ENCODE measurements at regions of chr4 and their contacts with region 1.

Region 1: GRCh38 chr4:60938621-60939020 is 261.5 kb upstream of the ADGRL3 start:
- DNase-seq: no peak
- H3K4me3 Mint-ChIP-seq: no peak overlapping the region
- H3K27ac Mint-ChIP-seq: no peak overlapping the region
- H3K4me1 Mint-ChIP-seq: no peaks in the 10 kb centered on the region
- H3K27me3 Mint-ChIP-seq: no peaks in the 10 kb centered on the region
- CTCF ChIP-seq: no peak

Region 2: DNA sequence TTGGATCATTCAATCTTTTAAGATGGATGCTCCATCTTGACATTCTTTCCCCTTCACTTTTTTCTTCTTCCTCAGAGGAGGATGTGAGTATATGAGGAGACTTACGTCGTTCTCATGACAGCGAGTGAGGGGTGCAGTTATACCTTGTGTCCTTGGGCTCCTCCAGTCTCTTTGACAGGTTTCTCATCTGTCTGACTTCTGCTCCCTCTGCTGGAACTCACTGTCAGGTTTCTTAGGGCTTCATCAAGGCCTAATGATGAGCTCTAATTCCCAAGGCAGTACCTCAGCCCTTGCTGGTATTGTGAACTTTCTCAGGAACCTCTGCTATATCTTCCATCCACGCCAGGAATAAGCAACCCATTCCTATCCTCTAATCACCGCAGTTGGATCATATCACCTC is 23.7 kb after region 1 on chr4:
- CTCF ChIA-PET with region 1: no interaction called
- intact Hi-C with region 1: loop called (anchors 1 kb)
- DNase-seq: no peak
- H3K4me3 Mint-ChIP-seq: no peak overlapping the region
- H3K27ac Mint-ChIP-seq: no peak overlapping the region
- H3K4me1 Mint-ChIP-seq: no peaks in the 10 kb centered on the region
- H3K27me3 Mint-ChIP-seq: no peaks in the 10 kb centered on the region
- CTCF ChIP-seq: no peak

Region 3: GRCh38 chr4:61301271-61301670 is 362.6 kb after region 1 on chr4:
- CTCF ChIA-PET with region 1: no interaction called
- intact Hi-C with region 1: no loop called
- DNase-seq: no peak
- H3K4me3 Mint-ChIP-seq: no peak overlapping the region
- H3K27ac Mint-ChIP-seq: no peak overlapping the region
- H3K4me1 Mint-ChIP-seq: no peaks in the 10 kb centered on the region
- H3K27me3 Mint-ChIP-seq: no peaks in the 10 kb centered on the region
- CTCF ChIP-seq: no peak

Region 4: GRCh38 chr4:61407642-61408618 is 469.3 kb after region 1 on chr4:
- CTCF ChIA-PET with region 1: no interaction called
- intact Hi-C with region 1: no loop called
- DNase-seq: no peak
- H3K4me3 Mint-ChIP-seq: no peak overlapping the region
- H3K27ac Mint-ChIP-seq: no peak overlapping the region
- H3K4me1 Mint-ChIP-seq: no peaks in the 10 kb centered on the region
- H3K27me3 Mint-ChIP-seq: no peaks in the 10 kb centered on the region
- CTCF ChIP-seq: no peak

Measured in Calu3 (cell line).